ENCODE measurements at regions of chr10 and their contacts with region 1.

Region 1: DNA sequence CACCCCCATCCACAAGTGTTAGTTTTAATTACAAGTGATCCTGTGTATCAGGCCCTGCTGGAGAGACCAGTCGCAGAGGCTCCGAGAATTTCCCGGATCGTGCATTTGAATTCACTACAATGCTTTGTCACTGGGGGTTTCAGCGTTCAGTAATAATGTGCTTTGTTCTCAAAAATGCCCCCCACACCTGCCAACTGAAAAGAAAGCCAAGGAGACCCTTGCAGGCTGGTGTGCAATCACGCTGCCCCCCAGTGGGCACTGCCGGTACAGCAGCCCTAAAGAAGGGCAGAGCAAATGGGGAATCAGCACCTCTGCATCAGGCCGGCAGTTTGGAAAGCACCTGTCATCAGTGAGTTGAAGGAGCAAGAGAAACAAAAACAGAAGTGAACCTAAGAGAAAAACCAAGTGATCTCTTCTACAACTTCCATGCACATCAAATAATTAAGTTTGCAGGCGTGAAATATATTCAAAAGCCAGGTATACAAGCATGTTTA is 177.6 kb downstream of the PARD3 start:
- H3K4me3 Mint-ChIP-seq: no peak overlapping the region
- H3K27ac Mint-ChIP-seq: no peak overlapping the region
- H3K4me1 Mint-ChIP-seq: peaks cover 19% of the 10 kb centered on the region
- H3K27me3 Mint-ChIP-seq: peaks cover 7% of the 10 kb centered on the region

Region 2: DNA sequence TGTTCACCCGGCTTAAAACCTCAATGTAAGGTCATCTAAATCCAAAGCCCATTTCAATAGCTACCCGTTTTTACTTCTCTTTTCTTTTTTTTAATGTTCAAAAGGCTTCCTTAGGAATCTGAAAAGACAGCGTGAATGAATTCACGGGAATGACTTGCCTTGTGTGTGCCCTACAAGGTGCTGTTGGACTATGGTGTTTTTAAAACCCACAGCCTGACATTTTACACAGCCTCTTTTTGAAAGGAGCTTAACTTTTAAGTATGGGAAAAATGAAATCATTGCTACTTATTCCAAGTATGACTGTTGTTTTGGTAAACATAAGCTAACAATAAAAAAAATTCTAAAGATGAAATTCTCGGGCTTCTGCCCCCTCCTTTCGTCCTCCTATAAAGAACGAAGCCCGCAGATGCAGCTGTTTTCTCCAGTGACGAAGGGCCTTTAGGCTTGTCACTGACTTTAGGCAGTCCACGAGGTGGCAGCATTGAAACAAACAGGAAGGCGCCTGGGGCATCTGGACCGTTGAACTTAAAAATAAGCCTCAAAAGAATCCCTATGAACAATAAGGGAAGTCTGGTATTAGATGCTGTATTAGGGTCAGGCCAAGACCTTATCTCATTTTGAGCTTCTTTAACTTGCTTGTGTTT is 1444.3 kb before region 1 on chr10:
- intact Hi-C with region 1: loop called (anchors 5 kb)
- H3K4me3 Mint-ChIP-seq: no peak overlapping the region
- H3K27ac Mint-ChIP-seq: no peak overlapping the region
- H3K4me1 Mint-ChIP-seq: peaks cover 6% of the 10 kb centered on the region
- H3K27me3 Mint-ChIP-seq: no peaks in the 10 kb centered on the region

Region 3: GRCh38 chr10:34522546-34522945 is 114.9 kb before region 1 on chr10:
- intact Hi-C with region 1: loop called (anchors 1 kb)
- H3K4me3 Mint-ChIP-seq: no peak overlapping the region
- H3K27ac Mint-ChIP-seq: no peak overlapping the region
- H3K4me1 Mint-ChIP-seq: no peaks in the 10 kb centered on the region
- H3K27me3 Mint-ChIP-seq: peaks cover 1% of the 10 kb centered on the region

Measured in dendritic cell treated with granulocyte-macrophage colony-stimulating factor and Interleukin-4, amounts not matched to agents 40 ng/mL and 50 ng/mL, for 4 days (primary cell).